SK-N-SH (cell line): ENCODE measurements at regions of chr3 and their contacts with region 1.

Region 1: DNA sequence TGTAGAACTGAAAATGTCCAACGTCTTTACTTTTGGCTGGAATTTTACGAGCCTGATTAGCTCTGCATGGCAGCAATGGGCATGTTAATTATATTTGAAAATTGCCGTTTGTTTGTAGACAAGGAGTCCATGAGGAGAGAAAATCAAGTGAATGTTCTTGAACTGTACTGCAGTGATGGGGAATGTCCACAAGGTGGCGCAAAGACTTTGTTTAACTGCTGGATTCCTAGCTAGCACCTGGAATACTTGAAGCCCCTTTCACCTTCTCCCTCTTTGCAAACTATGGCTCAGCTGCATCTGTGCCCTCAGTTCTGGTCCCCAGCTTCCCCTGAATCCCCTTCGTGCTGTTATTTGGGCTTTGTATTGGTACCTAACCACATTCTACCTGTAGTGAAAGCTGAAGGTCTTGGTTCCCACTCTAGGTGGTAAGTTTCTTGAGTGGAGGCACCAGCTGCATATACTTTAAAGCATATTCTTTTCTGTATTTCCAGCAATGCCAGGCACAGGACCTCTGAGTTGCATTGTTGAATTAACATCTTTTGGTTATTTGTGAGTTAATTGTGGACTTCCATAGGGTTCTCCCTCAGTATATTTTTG is 25.3 kb downstream of the EXOG start:
- DNase-seq: peak; percentile 70
- H3K4me3 ChIP-seq: peak overlapping the region in 1 of 2 experiments; percentile 13; a peak in 1 of 4 replicates
- H3K27ac ChIP-seq: no peak overlapping the region
- H3K4me1 ChIP-seq: peaks cover 0 to 4% of the 10 kb centered on the region in 2 experiments; a peak in 3 of 4 replicates
- H3K27me3 ChIP-seq: no peaks in the 10 kb centered on the region
- CTCF ChIP-seq: peak; percentile 94
- EP300 ChIP-seq: no peak
- RAD21 ChIP-seq: peak; percentile 92

Region 2: GRCh38 chr3:38460377-38461270 is 60.9 kb before region 1 on chr3:
- CTCF ChIA-PET with region 1: no interaction called
- POLR2A ChIA-PET with region 1: no interaction called
- DNase-seq: no peak
- H3K4me3 ChIP-seq: no peak overlapping the region
- H3K27ac ChIP-seq: no peak overlapping the region
- H3K4me1 ChIP-seq: peaks cover 0 to 28% of the 10 kb centered on the region in 2 experiments; a peak in 2 of 4 replicates
- H3K27me3 ChIP-seq: no peaks in the 10 kb centered on the region
- CTCF ChIP-seq: no peak
- EP300 ChIP-seq: no peak
- RAD21 ChIP-seq: no peak

Region 3: GRCh38 chr3:38542401-38543298 is 21.2 kb after region 1 on chr3:
- CTCF ChIA-PET with region 1: interaction called, 22 read pairs
- POLR2A ChIA-PET with region 1: no interaction called
- DNase-seq: peak; percentile 36
- H3K4me3 ChIP-seq: no peak overlapping the region
- H3K27ac ChIP-seq: no peak overlapping the region
- H3K4me1 ChIP-seq: peaks cover 0 to 22% of the 10 kb centered on the region in 2 experiments; a peak in 1 of 4 replicates
- H3K27me3 ChIP-seq: no peaks in the 10 kb centered on the region
- CTCF ChIP-seq: no peak
- EP300 ChIP-seq: peak in 1 of 2 experiments; percentile 46; a peak in 1 of 4 replicates
- RAD21 ChIP-seq: no peak

Region 4: GRCh38 chr3:38595393-38595792 is 73.9 kb after region 1 on chr3:
- CTCF ChIA-PET with region 1: interaction called, 11 read pairs
- POLR2A ChIA-PET with region 1: no interaction called
- DNase-seq: no peak
- H3K4me3 ChIP-seq: no peak overlapping the region
- H3K27ac ChIP-seq: no peak overlapping the region
- H3K4me1 ChIP-seq: no peaks in the 10 kb centered on the region; a peak in 1 of 4 replicates
- H3K27me3 ChIP-seq: no peaks in the 10 kb centered on the region
- CTCF ChIP-seq: no peak
- EP300 ChIP-seq: no peak
- RAD21 ChIP-seq: no peak

Region 5: GRCh38 chr3:38627956-38628355 is 106.5 kb after region 1 on chr3:
- CTCF ChIA-PET with region 1: interaction called, 19 read pairs
- POLR2A ChIA-PET with region 1: no interaction called
- DNase-seq: peak; percentile 66
- H3K4me3 ChIP-seq: peak overlapping the region in 1 of 2 experiments; percentile 44; a peak in 1 of 4 replicates
- H3K27ac ChIP-seq: no peak overlapping the region
- H3K4me1 ChIP-seq: no peaks in the 10 kb centered on the region
- H3K27me3 ChIP-seq: no peaks in the 10 kb centered on the region
- CTCF ChIP-seq: peak; percentile 58
- EP300 ChIP-seq: no peak
- RAD21 ChIP-seq: peak; percentile 41; the same call in 1 of the 2 replicates

Region 6: GRCh38 chr3:38843898-38844297 is 322.4 kb after region 1 on chr3:
- CTCF ChIA-PET with region 1: interaction called, 41 read pairs
- POLR2A ChIA-PET with region 1: no interaction called
- DNase-seq: peak; percentile 54
- H3K4me3 ChIP-seq: no peak overlapping the region
- H3K27ac ChIP-seq: no peak overlapping the region
- H3K4me1 ChIP-seq: peaks cover 0 to 2% of the 10 kb centered on the region in 2 experiments; a peak in 2 of 4 replicates
- H3K27me3 ChIP-seq: no peaks in the 10 kb centered on the region; the same call in 1 of the 2 replicates
- CTCF ChIP-seq: peak; percentile 67
- EP300 ChIP-seq: no peak
- RAD21 ChIP-seq: peak; percentile 91